ENCODE measurements at regions of chr2 and their contacts with region 1.

Region 1: DNA sequence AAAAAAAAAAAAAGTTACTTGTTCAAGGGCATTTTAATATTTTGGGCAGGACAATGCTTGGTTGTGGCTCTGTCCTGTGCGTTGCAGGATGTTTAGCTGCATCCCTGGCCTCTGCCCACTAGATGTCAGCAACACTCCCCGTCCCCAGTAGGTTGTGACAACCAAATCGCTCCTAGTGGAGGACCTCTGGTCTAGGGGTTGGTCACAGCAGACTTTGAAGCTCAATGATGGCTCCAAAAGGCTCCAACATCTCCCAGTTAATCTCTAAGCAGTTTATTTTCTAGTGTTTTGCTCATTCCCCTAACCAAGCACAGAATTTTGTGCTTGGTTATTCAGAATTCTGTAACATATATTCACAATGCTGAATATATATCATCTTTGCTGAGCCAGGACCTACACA is 67.0 kb downstream of the CHRNA1 start:
- DNase-seq: peak; percentile 76
- ATAC-seq: peak; percentile 98
- H3K4me3 ChIP-seq: no peak overlapping the region
- H3K27ac ChIP-seq: no peak overlapping the region
- H3K4me1 ChIP-seq: no peaks in the 10 kb centered on the region
- H3K27me3 ChIP-seq: peaks cover 6% of the 10 kb centered on the region
- CTCF ChIP-seq: peak; percentile 88

Region 2: GRCh38 chr2:174644401-174644800 is 52.9 kb before region 1 on chr2:
- CTCF ChIA-PET with region 1: interaction called, 10 read pairs
- POLR2A ChIA-PET with region 1: no interaction called
- intact Hi-C with region 1: no loop called
- DNase-seq: no peak
- ATAC-seq: no peak
- H3K4me3 ChIP-seq: no peak overlapping the region
- H3K27ac ChIP-seq: no peak overlapping the region
- H3K4me1 ChIP-seq: no peaks in the 10 kb centered on the region
- H3K27me3 ChIP-seq: peaks cover 7% of the 10 kb centered on the region; the same call in 1 of the 2 replicates
- CTCF ChIP-seq: no peak

Region 3: GRCh38 chr2:174748948-174749347 is 51.7 kb after region 1 on chr2:
- CTCF ChIA-PET with region 1: interaction called, 6 read pairs
- POLR2A ChIA-PET with region 1: no interaction called
- intact Hi-C with region 1: loop called (anchors 1 kb)
- DNase-seq: peak; percentile 91
- ATAC-seq: peak; percentile 80
- H3K4me3 ChIP-seq: no peak overlapping the region
- H3K27ac ChIP-seq: no peak overlapping the region
- H3K4me1 ChIP-seq: peaks cover 20% of the 10 kb centered on the region
- H3K27me3 ChIP-seq: no peaks in the 10 kb centered on the region
- CTCF ChIP-seq: peak; percentile 88

Region 4: DNA sequence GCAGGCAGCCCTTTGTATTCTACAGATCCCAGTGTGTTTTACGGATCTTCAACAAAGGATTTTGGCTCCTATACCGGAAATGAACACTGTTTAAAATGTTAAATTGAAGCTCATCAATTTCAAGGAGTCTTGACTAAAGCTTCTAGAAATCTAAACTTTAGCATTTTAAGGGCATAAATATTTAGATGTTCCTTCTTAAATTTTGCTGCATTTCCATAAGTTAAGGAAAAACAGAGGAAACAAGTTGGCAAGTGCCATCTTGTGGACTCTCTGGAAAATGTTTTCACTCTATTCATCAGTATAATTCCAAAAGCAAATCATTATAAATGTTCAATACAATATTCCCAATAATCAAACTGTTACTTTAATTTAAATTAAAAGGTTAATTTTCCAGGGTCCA is 288.4 kb after region 1 on chr2:
- CTCF ChIA-PET with region 1: no interaction called
- POLR2A ChIA-PET with region 1: no interaction called
- intact Hi-C with region 1: loop called (anchors 1 kb)
- DNase-seq: peak; percentile 41
- ATAC-seq: peak; percentile 38; the same call in 1 of the 2 replicates
- H3K4me3 ChIP-seq: no peak overlapping the region
- H3K27ac ChIP-seq: no peak overlapping the region
- H3K4me1 ChIP-seq: no peaks in the 10 kb centered on the region
- H3K27me3 ChIP-seq: no peaks in the 10 kb centered on the region
- CTCF ChIP-seq: peak; percentile 85

Region 5: DNA sequence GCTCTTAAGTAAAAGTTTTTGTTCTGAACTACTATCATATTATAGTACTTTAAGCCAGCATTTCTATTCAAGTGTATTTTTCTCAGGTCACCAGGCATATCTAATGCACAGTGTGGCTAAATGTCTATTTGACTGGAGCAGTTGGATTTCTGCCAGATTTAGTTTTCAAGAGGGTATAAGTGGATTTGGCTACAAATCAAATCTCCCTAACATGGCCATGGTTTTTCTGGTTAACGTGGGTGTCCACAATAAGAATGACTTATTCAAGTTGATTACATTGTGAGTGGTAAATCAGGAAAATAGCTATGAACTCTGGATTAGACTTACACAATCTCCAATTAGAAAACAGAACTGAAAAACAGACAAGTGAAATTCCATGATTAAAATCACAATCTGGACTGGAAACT is 313.6 kb after region 1 on chr2:
- CTCF ChIA-PET with region 1: interaction called, 11 read pairs
- POLR2A ChIA-PET with region 1: no interaction called
- intact Hi-C with region 1: no loop called
- DNase-seq: no peak
- ATAC-seq: no peak
- H3K4me3 ChIP-seq: no peak overlapping the region
- H3K27ac ChIP-seq: no peak overlapping the region
- H3K4me1 ChIP-seq: no peaks in the 10 kb centered on the region
- H3K27me3 ChIP-seq: peaks cover 25% of the 10 kb centered on the region
- CTCF ChIP-seq: no peak

Measured in PC-3 (cell line).